CD4-positive, alpha-beta memory T cell (primary cell): ENCODE measurements at regions of chr19 and their contacts with region 1.

Region 1: DNA sequence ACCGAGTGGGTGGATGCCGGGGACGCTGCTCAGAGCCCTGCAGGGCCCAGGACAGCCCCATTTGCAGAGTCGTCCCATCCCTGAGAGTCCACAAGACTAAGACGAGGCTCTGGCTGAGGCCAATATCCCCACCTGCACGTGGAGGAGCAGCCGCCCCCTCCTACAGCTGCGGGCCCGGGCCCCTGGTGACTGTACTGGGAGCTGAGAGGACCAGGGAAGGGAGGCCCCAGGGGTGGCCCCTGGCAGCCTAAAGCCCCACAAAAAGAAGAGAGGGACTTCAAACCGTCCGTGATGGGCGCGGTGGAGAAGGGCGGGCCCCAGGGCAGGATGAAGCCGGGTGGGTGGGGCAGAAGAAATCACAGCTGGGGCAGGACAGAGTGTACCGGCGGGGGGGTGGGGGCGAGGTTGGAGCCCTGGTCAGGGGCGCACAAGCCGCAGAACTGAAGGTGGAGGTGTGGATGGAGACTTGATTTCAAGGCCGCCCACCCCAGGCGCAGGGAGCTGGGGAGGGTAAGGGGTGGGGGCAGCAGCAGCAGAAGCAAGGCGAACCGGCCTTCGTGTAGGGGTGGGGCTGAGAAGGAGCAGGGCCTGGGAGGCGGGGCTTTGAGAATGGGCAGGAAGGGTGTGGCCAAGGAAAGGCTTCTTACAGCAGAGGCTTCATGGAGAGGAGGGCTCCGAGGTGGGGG is 12.9 kb downstream of the CFD start:
- DNase-seq: peak; percentile 84 to 93 (median 91)
- H3K4me3 ChIP-seq: peak overlapping the region in 1 of 2 donors; percentile 51
- H3K4me3 Mint-ChIP-seq: peak overlapping the region; percentile 75 to 92 (median 84)
- H3K27ac ChIP-seq: peak overlapping the region; percentile 55
- H3K27ac Mint-ChIP-seq: peak overlapping the region; percentile 88 to 98 (median 97)
- H3K4me1 ChIP-seq: peaks cover 13% of the 10 kb centered on the region
- H3K4me1 Mint-ChIP-seq: peaks cover 4 to 16% (median 9%) of the 10 kb centered on the region in 4 donors
- H3K27me3 ChIP-seq: no peaks in the 10 kb centered on the region
- H3K27me3 Mint-ChIP-seq: no peaks in the 10 kb centered on the region

Region 2: GRCh38 chr19:821825-822503 is 50.4 kb before region 1 on chr19 and contains the start of gene PLPPR3:
- CTCF ChIA-PET with region 1: no interaction called
- POLR2A ChIA-PET with region 1: no interaction called
- intact Hi-C with region 1: no loop called
- DNase-seq: no peak
- H3K4me3 ChIP-seq: no peak within 1 kb of the TSS
- H3K4me3 Mint-ChIP-seq: peak within 1 kb of the TSS in 1 of 8 donors; percentile 6
- H3K27ac ChIP-seq: no peak within 1 kb of the TSS
- H3K27ac Mint-ChIP-seq: peak within 1 kb of the TSS in 1 of 7 donors; percentile 57
- H3K4me1 ChIP-seq: no peaks in the 10 kb centered on the region
- H3K4me1 Mint-ChIP-seq: no peaks in the 10 kb centered on the region
- H3K27me3 ChIP-seq: no peaks in the 10 kb centered on the region
- H3K27me3 Mint-ChIP-seq: peaks cover 4 to 7% of the 10 kb centered on the region in 2 donors
- total RNA-seq, gene PLPPR3: not detected

Region 3: DNA sequence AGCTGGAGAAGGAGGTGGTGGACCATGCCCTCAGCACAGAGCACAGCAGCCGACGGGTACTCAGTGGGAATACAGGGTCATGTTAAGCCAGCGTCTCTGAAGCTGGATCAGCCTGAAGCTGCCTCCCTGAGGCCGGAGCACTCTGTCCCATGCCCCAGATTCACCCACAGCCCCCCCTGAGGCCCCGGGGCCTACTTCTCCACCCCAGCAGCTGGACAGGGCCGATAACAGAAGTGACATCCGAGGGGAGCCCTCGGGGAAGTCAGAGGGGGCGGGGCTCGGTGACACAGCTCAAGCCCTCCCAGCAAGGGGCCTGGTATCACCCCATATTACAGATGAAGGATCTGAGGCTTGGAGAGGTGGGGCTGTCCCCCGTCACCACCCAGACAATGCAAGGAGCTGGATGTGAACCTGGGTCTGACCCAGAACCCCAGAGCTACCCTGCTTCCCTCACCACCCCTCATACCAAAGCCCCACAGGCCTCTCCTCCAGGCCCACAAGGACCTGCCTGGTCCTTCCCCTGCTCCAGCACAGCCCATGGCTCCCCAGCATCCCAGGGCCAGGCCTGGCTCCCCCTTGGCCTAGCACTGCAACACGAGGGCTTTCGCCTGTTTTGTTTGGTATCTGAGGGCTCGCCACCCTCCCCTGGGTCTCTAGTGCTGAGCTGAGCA is 34.9 kb after region 1 on chr19:
- CTCF ChIA-PET with region 1: interaction called, 4 read pairs
- POLR2A ChIA-PET with region 1: interaction called, 41 read pairs
- intact Hi-C with region 1: loop called (anchors 1 kb)
- DNase-seq: no peak
- H3K4me3 ChIP-seq: no peak overlapping the region
- H3K4me3 Mint-ChIP-seq: peak overlapping the region; percentile 43 to 89 (median 62)
- H3K27ac ChIP-seq: peak overlapping the region; percentile 89
- H3K27ac Mint-ChIP-seq: peak overlapping the region; percentile 93 to 100 (median 100)
- H3K4me1 ChIP-seq: peaks cover 70% of the 10 kb centered on the region
- H3K4me1 Mint-ChIP-seq: peaks cover 19 to 72% (median 44%) of the 10 kb centered on the region in 4 donors
- H3K27me3 ChIP-seq: no peaks in the 10 kb centered on the region
- H3K27me3 Mint-ChIP-seq: no peaks in the 10 kb centered on the region

Region 4: DNA sequence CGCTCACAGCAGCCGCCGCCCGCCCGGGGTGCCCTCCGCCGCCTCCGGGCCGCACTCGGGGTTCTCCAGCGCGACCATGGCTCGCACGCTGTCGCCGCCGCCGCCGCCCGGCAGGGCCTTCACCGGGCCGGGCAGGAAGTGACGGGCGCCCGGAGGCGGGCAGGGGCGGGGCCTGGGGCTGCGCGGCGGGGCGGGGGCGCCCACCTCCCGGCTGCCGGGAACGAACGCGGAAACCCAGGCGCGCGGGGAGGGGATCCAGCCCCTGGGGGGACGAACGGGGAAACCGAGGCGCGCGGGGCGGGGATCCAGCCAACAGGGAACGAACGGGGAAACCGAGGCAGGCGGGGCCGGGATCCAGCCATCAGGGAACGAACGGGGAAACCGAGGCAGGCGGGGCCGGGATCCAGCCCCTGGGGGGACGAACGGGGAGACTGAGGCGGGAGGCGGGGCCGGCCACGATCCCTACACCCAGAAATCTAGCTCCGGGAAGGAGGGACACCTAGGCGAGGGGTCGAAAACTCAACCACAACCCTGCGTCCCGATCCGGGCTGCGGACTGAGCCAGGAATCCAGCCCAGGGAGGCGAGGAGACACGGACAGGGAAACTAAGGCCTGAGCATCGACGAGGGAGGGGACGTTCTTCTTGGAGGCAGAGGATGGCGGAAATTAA is 40.8 kb after region 1 on chr19 and contains the start of gene R3HDM4:
- CTCF ChIA-PET with region 1: interaction called, 119 read pairs
- POLR2A ChIA-PET with region 1: interaction called, 86 read pairs
- intact Hi-C with region 1: loop called (anchors 1 kb)
- DNase-seq: peak; percentile 82 to 85 (median 85)
- H3K4me3 ChIP-seq: peak within 1 kb of the TSS; percentile 58 to 69
- H3K4me3 Mint-ChIP-seq: peak within 1 kb of the TSS; percentile 82 to 90 (median 86)
- H3K27ac ChIP-seq: peak within 1 kb of the TSS; percentile 94
- H3K27ac Mint-ChIP-seq: peak within 1 kb of the TSS; percentile 88 to 95 (median 93)
- H3K4me1 ChIP-seq: peaks cover 57% of the 10 kb centered on the region
- H3K4me1 Mint-ChIP-seq: peaks cover 13 to 42% (median 28%) of the 10 kb centered on the region in 4 donors
- H3K27me3 ChIP-seq: no peaks in the 10 kb centered on the region
- H3K27me3 Mint-ChIP-seq: peaks cover 0 to 4% of the 10 kb centered on the region in 2 donors
- total RNA-seq, gene R3HDM4: 153 to 160 TPM